SK-N-SH (cell line): ENCODE measurements at regions of chr17 and their contacts with region 1.

Region 1: DNA sequence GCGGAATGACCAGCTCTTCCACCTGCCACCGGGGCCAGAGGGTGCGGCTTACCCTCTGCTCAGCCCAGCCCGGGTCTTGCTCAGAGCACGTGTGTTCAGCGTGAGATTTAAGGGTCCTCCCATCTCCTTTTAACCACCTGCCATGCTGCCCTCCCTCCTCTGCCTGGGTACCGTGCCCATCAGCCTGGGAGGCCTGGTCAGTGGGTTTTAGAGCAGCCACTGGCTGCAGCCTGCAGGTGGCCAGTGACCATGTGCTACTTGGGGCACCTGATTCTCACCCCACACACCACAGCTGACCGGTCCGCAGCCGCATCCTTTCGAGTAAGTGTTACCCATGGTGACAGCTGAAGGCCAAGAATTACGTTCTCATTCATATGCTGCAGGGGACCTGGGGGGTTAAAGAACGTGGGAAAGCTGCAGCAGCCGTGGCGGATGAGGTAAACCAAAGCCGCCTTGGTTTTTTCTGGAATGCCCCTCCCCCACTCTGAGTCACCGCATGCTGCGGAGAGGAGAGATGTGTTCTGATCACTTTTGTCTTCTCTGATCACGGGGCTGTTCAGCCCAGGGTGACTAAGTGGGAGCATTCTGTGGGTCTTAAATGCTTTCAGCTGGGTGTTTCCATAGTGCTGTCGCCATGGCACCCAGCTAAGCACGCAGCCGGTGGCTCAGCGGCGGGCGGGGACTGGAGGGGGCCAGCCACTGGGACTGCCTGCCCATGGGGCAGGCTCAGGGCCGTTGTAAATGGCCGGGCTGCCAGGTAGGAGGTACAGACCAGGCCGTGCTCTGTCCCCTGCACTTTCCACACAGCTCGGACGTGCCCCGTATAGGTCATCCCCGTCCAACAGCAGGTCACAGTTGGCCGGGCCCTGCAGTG is 59.8 kb downstream of the BAIAP2 start:
- DNase-seq: peak; percentile 84
- H3K4me3 ChIP-seq: 0 out of 4 replicates have a peak overlapping the region, but pooled peaks of 1 of the 2 experiments have one; percentile 5
- H3K27ac ChIP-seq: peak overlapping the region; percentile 40 to 99
- H3K4me1 ChIP-seq: peaks cover 42 to 49% of the 10 kb centered on the region in 2 experiments; a peak in 3 of 4 replicates
- H3K27me3 ChIP-seq: no peaks in the 10 kb centered on the region
- CTCF ChIP-seq: peak; percentile 23; the same call in 1 of the 2 replicates
- EP300 ChIP-seq: peak; percentile 44 to 90; a peak in 2 of 4 replicates
- RAD21 ChIP-seq: no peak

Region 2: GRCh38 chr17:80991645-80992076 is 103.1 kb before region 1 on chr17 and contains the start of gene CHMP6:
- CTCF ChIA-PET with region 1: interaction called, 15 read pairs
- POLR2A ChIA-PET with region 1: no interaction called
- DNase-seq: peak; percentile 99
- H3K4me3 ChIP-seq: peak within 1 kb of the TSS; percentile 79 to 89
- H3K27ac ChIP-seq: no peak within 1 kb of the TSS; a peak in 1 of 4 replicates
- H3K4me1 ChIP-seq: peaks cover 10 to 17% of the 10 kb centered on the region in 2 experiments; a peak in 1 of 4 replicates
- H3K27me3 ChIP-seq: no peaks in the 10 kb centered on the region
- CTCF ChIP-seq: peak; percentile 32
- EP300 ChIP-seq: no peak; a peak in 1 of 4 replicates
- RAD21 ChIP-seq: no peak
- polyA plus RNA-seq, gene CHMP6: 44.1 and 44.3 TPM in 2 replicates

Region 3: DNA sequence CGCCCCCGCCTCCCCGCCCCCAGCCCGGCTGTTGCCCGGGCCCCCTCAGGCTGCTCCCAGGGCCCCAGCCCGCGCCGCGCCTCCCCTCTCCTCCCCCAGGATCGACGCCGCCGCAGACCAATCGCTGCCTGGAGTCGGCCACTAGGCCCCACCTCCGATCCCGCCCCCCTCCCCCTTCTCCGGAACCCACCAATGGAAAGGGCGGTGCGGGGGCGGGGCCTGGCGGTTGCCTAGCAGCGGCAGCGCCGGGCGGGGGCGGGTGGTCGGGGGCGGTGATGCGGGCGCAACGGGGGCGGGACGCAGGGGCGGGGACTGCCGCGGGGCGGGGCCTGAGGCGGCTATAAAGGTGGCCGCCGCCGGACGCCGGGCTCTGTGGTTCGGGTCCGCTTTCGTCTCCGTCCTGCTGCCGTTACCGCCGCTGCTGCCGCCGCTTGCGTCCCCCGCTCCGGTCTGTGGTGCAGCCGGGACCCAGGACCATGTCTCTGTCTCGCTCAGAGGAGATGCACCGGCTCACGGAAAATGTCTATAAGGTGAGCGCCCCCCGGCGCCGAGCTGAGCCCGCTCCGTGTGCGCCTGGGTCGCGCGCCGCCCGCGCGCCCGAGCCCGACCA is 59.9 kb before region 1 on chr17 and contains the start of gene BAIAP2:
- CTCF ChIA-PET with region 1: interaction called, 668 read pairs
- POLR2A ChIA-PET with region 1: no interaction called
- DNase-seq: peak; percentile 100
- H3K4me3 ChIP-seq: peak within 1 kb of the TSS; percentile 83 to 94
- H3K27ac ChIP-seq: peak within 1 kb of the TSS in 1 of 2 experiments; percentile 75; a peak in 1 of 4 replicates
- H3K4me1 ChIP-seq: peaks cover 4 to 51% of the 10 kb centered on the region in 2 experiments; a peak in 3 of 4 replicates
- H3K27me3 ChIP-seq: no peaks in the 10 kb centered on the region
- CTCF ChIP-seq: peak; percentile 38; the same call in 1 of the 2 replicates
- EP300 ChIP-seq: no peak
- RAD21 ChIP-seq: peak; percentile 21; the same call in 1 of the 2 replicates
- polyA plus RNA-seq, gene BAIAP2: 15.5 and 19.8 TPM in 2 replicates

Region 4: GRCh38 chr17:81071761-81072741 is 22.7 kb before region 1 on chr17:
- CTCF ChIA-PET with region 1: interaction called, 11 read pairs
- POLR2A ChIA-PET with region 1: interaction called, 4 read pairs
- DNase-seq: no peak
- H3K4me3 ChIP-seq: no peak overlapping the region
- H3K27ac ChIP-seq: no peak overlapping the region
- H3K4me1 ChIP-seq: peaks cover 0 to 48% of the 10 kb centered on the region in 2 experiments; a peak in 1 of 4 replicates
- H3K27me3 ChIP-seq: no peaks in the 10 kb centered on the region
- CTCF ChIP-seq: no peak
- EP300 ChIP-seq: no peak
- RAD21 ChIP-seq: no peak

Region 5: GRCh38 chr17:81083125-81083765 is 11.5 kb before region 1 on chr17:
- CTCF ChIA-PET with region 1: interaction called, 188 read pairs
- POLR2A ChIA-PET with region 1: no interaction called
- DNase-seq: peak; percentile 87
- H3K4me3 ChIP-seq: no peak overlapping the region
- H3K27ac ChIP-seq: peak overlapping the region in 1 of 2 experiments; percentile 40; a peak in 1 of 4 replicates
- H3K4me1 ChIP-seq: peaks cover 0 to 31% of the 10 kb centered on the region in 2 experiments; a peak in 1 of 4 replicates
- H3K27me3 ChIP-seq: no peaks in the 10 kb centered on the region
- CTCF ChIP-seq: no peak
- EP300 ChIP-seq: no peak
- RAD21 ChIP-seq: no peak

Region 6: GRCh38 chr17:81119223-81120148 is 24.7 kb after region 1 on chr17:
- CTCF ChIA-PET with region 1: interaction called, 75 read pairs
- POLR2A ChIA-PET with region 1: no interaction called
- DNase-seq: peak; percentile 96
- H3K4me3 ChIP-seq: no peak overlapping the region
- H3K27ac ChIP-seq: no peak overlapping the region
- H3K4me1 ChIP-seq: peaks cover 0 to 29% of the 10 kb centered on the region in 2 experiments; a peak in 1 of 4 replicates
- H3K27me3 ChIP-seq: no peaks in the 10 kb centered on the region
- CTCF ChIP-seq: no peak
- EP300 ChIP-seq: no peak
- RAD21 ChIP-seq: no peak

Region 7: GRCh38 chr17:81349397-81350319 is 254.9 kb after region 1 on chr17:
- CTCF ChIA-PET with region 1: no interaction called
- POLR2A ChIA-PET with region 1: no interaction called
- DNase-seq: no peak
- H3K4me3 ChIP-seq: no peak overlapping the region
- H3K27ac ChIP-seq: no peak overlapping the region
- H3K4me1 ChIP-seq: peaks cover 0 to 14% of the 10 kb centered on the region in 2 experiments; a peak in 2 of 4 replicates
- H3K27me3 ChIP-seq: no peaks in the 10 kb centered on the region
- CTCF ChIP-seq: no peak
- EP300 ChIP-seq: no peak
- RAD21 ChIP-seq: no peak